Psoas muscle (tissue), 8 donors: ENCODE measurements at regions of chr10 and their contacts with region 1.

Region 1: DNA sequence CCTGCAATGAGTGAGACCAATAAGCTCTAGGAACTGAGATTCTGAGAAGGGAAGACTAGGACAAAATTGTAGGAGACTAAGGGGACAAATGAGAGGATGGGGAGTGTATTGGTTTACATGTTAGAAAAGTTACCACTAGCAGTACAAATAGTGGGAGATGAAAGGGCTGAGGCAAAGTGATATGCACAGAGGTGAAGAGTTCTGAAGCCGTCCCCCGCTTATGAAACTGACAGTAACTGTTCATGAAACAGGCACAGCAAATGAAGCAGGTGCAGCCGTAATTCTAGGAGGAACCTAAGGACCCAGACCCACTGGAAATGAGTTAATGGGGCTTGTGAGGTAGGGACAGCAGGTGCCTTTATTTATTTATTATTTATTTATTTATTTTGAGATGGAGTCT is 211.3 kb downstream of the PRKG1 start:
- DNase-seq: no peak
- ATAC-seq: peak in 1 of 4 donors; percentile 35
- H3K4me3 ChIP-seq: no peak overlapping the region
- H3K27ac ChIP-seq: no peak overlapping the region
- H3K4me1 ChIP-seq: peaks cover 3% of the 10 kb centered on the region
- H3K27me3 ChIP-seq: no peaks in the 10 kb centered on the region
- CTCF ChIP-seq: no peak

Region 2: DNA sequence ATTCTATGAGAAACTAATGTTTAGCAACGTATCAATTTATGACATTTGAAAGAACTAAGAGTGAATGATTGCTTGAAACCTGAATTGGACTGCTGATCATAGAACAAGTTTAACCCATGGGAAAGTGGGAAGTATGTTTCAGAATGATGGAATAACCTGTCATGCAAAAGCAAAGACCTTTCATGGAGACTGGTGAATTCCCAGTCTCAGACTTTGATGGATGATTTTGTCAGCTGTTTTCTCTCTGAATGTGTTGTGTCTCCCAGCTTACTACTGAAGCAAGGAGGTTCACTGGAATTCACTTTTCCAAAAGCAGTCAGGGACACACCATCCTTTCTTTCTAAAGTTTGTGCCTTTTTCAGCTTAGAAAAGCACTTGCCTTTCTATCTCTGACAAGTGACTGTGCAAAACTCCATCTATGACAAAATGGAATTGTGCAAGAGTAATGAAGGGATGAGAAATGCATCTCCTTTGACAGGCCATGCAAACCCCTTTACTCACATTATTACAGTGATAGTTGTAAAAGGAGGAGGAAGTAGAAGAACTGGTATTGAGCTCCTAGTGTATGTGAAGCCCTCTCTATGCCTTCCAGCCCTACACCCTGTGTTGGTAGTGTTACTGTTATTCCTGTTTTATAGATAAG is 35.2 kb before region 1 on chr10:
- intact Hi-C with region 1: loop called in 1 of 2 experiments (anchors 5 kb)
- DNase-seq: no peak
- ATAC-seq: peak; percentile 27 to 67 (median 46)
- H3K4me3 ChIP-seq: no peak overlapping the region
- H3K27ac ChIP-seq: peak overlapping the region; percentile 47
- H3K4me1 ChIP-seq: peaks cover 48% of the 10 kb centered on the region
- H3K27me3 ChIP-seq: no peaks in the 10 kb centered on the region
- CTCF ChIP-seq: no peak